ENCODE measurements at regions of chr7 and their contacts with region 1.

Region 1: DNA sequence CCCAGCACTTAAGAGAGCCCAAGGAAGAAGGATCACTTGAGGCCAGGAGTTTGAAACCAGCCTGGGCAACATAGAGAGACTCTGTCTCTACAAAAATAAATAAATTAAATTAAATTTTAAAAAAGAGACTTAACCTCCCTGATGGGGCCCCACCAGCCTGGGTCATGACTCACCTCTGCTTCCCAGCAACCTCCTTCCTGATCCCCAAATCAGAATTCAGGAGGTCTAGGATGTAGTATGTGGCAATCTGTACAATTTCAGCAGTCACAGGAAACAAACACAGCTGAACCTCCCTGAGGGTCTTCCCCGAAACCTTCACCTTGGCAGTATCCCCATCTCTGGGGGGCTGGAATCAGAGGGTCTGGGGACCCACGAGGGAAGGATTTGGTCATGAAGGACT is 9.7 kb upstream of the PPP1R35 start:
- DNase-seq: no peak
- H3K4me3 ChIP-seq: no peak overlapping the region
- H3K27ac ChIP-seq: no peak overlapping the region
- H3K4me1 ChIP-seq: peaks cover 0 to 7% (median 2%) of the 10 kb centered on the region in 4 donors
- H3K27me3 ChIP-seq: no peaks in the 10 kb centered on the region
- CTCF ChIP-seq: no peak
- EP300 ChIP-seq: no peak
- POLR2A ChIP-seq: no peak

Region 2: DNA sequence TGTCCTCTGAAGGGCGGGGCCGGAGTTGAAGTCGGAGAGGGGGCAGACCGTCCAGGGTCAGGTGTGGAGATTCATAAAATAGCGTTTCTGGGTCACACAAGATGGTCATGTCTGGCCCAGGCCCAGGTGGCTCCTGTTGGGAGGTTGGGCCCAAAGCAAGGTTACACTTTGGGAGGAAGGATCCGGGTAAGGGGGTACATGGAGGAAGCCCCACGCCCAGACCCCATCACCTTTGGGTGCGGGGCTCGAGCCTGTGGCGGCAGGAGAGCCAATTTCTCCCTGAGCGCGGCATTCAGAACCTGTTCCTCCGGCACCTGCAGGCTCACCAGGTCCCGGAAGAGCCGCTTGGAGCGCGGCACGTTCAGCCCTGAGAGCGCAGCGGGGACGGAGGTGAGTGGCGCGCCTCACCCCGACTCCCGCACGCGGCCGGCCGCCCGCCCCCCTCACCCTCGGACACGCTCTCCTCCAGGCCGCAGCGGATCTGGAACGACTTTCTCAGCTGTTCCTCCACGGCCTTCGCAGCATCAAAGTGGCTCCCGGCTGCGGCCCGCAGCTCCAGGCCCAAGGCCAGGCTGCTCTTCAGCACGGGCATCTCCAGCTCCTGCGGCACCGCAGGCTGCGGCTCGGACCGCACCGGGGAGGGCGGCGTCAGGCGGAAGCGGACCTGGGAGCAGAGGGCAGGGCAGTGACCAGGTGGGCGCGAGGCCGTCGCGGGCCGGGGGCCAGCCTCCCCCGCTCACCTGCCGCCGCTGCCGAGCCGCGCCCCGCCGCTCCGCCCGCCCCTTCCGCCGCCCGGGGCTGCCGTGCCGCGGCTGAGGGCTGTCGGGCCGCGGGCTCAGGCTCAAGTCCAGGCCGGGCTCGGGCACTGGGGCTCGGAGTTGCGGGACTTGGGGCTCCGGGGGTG is 10.4 kb before region 1 on chr7:
- intact Hi-C with region 1: loop called (anchors 1 kb)
- DNase-seq: peak; percentile 75
- H3K4me3 ChIP-seq: peak overlapping the region; percentile 83 to 96 (median 91)
- H3K27ac ChIP-seq: peak overlapping the region; percentile 94 to 98 (median 96)
- H3K4me1 ChIP-seq: peaks cover 0 to 43% (median 35%) of the 10 kb centered on the region in 4 donors
- H3K27me3 ChIP-seq: no peaks in the 10 kb centered on the region
- CTCF ChIP-seq: no peak
- EP300 ChIP-seq: no peak
- POLR2A ChIP-seq: no peak

Region 3: DNA sequence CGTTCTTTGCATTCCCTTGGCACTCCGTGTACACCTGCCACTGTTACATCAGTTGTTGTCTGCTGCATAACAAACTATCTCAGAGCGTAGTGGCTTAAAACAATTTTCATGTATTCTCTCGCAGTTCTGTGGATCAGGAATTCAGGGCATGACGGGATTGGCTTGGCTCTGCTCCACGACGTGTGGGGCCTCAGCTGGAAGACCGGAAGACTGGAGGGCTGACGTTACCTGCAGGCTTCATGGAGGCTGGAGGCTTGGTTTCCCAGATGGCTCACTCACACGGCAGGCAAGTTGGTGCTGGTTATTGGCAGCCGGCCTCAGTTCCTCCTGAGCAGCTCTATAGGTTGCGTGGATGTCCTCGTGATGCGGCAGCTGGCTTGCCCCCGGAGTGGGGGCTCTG is 63.2 kb after region 1 on chr7:
- intact Hi-C with region 1: no loop called
- DNase-seq: peak; percentile 77
- H3K4me3 ChIP-seq: no peak overlapping the region
- H3K27ac ChIP-seq: no peak overlapping the region
- H3K4me1 ChIP-seq: no peaks in the 10 kb centered on the region
- H3K27me3 ChIP-seq: peaks cover 0 to 6% (median 0%) of the 10 kb centered on the region in 3 donors
- CTCF ChIP-seq: no peak
- EP300 ChIP-seq: no peak
- POLR2A ChIP-seq: no peak

Measured in sigmoid colon (tissue), 7 donors.